Gastrocnemius medialis (tissue), 4 donors: ENCODE measurements at regions of chr12 and their contacts with region 1.

Region 1: DNA sequence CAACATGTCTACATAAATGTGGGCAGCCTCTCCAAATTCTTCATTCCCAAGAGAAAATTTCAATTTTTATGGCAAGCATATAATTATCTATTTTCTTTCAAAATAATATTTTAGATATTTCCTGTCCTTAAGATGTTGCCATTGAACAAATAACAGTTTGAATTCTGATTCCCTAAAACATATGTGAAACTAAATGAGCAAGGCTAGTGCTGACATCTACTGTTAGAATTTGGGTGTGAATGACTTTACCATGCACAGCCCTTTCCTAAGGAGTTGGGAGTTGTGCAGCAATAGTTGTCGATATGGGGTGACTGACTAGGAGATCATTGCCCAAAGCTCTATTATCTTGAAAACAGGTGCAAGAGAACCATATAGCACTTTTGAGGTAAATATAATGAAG is 108.2 kb upstream of the SLC38A4 start:
- DNase-seq: no peak
- ATAC-seq: peak; percentile 91 to 92
- H3K4me3 ChIP-seq: no peak overlapping the region
- H3K27ac ChIP-seq: no peak overlapping the region
- H3K4me1 ChIP-seq: peaks cover 4 to 5% of the 10 kb centered on the region in 2 donors
- H3K27me3 ChIP-seq: no peaks in the 10 kb centered on the region
- CTCF ChIP-seq: peak; percentile 41 to 63 (median 55)
- POLR2A ChIP-seq: no peak

Region 2: GRCh38 chr12:46124848-46125619 is 808.9 kb before region 1 on chr12:
- in situ Hi-C with region 1: no loop called
- intact Hi-C with region 1: loop called (anchors 2 kb)
- DNase-seq: peak in 1 of 2 donors; percentile 41
- ATAC-seq: peak; percentile 88 to 94
- H3K4me3 ChIP-seq: peak overlapping the region in 1 of 4 donors; percentile 18
- H3K27ac ChIP-seq: no peak overlapping the region
- H3K4me1 ChIP-seq: no peaks in the 10 kb centered on the region
- H3K27me3 ChIP-seq: no peaks in the 10 kb centered on the region
- CTCF ChIP-seq: peak; percentile 59 to 85 (median 65)
- POLR2A ChIP-seq: no peak

Region 3: GRCh38 chr12:46332260-46332659 is 601.7 kb before region 1 on chr12:
- in situ Hi-C with region 1: loop called in 2 of 4 experiments (anchors 10 to 25 kb)
- intact Hi-C with region 1: no loop called
- DNase-seq: no peak
- ATAC-seq: no peak
- H3K4me3 ChIP-seq: no peak overlapping the region
- H3K27ac ChIP-seq: no peak overlapping the region
- H3K4me1 ChIP-seq: no peaks in the 10 kb centered on the region
- H3K27me3 ChIP-seq: no peaks in the 10 kb centered on the region
- CTCF ChIP-seq: no peak
- POLR2A ChIP-seq: no peak

Region 4: GRCh38 chr12:46342562-46343033 is 591.3 kb before region 1 on chr12:
- in situ Hi-C with region 1: loop called in 3 of 4 experiments (anchors 10 to 25 kb)
- intact Hi-C with region 1: loop called (anchors 1 kb)
- DNase-seq: no peak
- ATAC-seq: peak; percentile 80 to 87
- H3K4me3 ChIP-seq: no peak overlapping the region
- H3K27ac ChIP-seq: no peak overlapping the region
- H3K4me1 ChIP-seq: peaks cover 4 to 5% of the 10 kb centered on the region in 2 donors
- H3K27me3 ChIP-seq: no peaks in the 10 kb centered on the region
- CTCF ChIP-seq: peak; percentile 56 to 79 (median 66)
- POLR2A ChIP-seq: no peak

Region 5: DNA sequence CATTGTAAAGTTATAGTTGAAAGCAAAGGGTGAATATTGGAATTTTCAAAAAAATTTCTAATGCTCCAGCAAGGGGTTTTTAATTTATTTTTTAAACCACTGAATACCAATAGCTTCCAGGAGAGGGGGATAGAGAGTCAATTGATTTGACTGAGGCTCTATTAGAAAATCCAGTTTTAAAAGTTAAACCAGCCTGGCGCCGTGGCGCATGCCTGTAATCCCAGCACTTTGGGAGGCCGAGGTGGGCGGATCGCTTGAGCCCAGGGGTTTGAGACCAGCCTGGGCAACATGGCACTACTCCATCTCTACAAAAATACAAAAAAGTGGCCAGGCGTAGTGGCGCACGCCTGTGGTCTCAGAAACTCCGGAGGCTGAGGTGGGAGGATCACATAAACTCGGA is 258.2 kb before region 1 on chr12:
- in situ Hi-C with region 1: loop called in 3 of 4 experiments (anchors 5 to 10 kb)
- intact Hi-C with region 1: loop called (anchors 1 kb)
- DNase-seq: no peak
- ATAC-seq: no peak
- H3K4me3 ChIP-seq: no peak overlapping the region
- H3K27ac ChIP-seq: no peak overlapping the region
- H3K4me1 ChIP-seq: peaks cover 27 to 38% of the 10 kb centered on the region in 2 donors
- H3K27me3 ChIP-seq: no peaks in the 10 kb centered on the region
- CTCF ChIP-seq: peak; percentile 60 to 77 (median 72)
- POLR2A ChIP-seq: no peak

Region 6: DNA sequence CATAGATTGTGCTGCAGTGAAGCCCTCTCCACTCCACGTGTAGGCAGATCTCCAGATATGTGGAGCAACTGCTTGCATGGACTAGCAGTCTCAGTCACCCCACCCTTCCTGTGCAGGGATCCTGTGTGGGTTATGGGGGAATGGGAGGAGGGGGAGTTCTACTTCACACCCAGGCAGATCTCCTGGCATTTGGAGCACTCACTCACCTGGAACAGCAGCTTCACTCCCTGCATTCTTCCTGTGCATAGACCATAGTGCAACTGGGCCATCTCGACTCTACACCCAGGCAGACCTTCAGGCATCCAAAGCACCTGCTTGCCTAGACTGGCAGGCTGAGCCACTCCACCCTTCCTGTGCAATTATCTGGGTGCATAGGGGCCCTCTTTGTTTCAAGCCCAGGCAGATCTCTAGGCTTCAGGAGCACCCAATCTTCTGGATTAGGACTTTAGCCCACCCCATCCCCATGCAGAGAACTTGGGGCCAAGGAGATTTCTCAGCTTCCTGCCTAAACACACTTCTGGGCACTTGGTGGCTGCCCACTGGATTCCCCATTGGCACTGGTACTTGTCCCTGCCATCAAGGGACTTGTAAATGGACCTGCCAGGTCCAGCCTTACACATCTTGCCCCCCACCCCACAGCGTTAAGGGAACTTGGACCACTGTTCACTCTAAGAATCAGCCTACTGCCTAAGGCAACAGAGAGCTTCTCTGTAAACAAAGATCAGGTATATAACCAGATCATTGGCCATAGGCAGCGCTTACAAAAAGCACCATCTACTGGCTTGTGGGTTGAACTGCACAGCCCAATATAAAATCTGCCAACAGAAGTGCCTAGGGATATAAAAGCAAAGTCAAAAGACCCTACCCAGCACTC is 49.7 kb after region 1 on chr12:
- in situ Hi-C with region 1: no loop called
- intact Hi-C with region 1: loop called (anchors 1 kb)
- DNase-seq: peak in 1 of 2 donors; percentile 36
- ATAC-seq: peak; percentile 98 to 99
- H3K4me3 ChIP-seq: no peak overlapping the region
- H3K27ac ChIP-seq: peak overlapping the region in 1 of 4 donors; percentile 17
- H3K4me1 ChIP-seq: peaks cover 3 to 10% of the 10 kb centered on the region in 2 donors
- H3K27me3 ChIP-seq: no peaks in the 10 kb centered on the region
- CTCF ChIP-seq: peak; percentile 73 to 85 (median 78)
- POLR2A ChIP-seq: no peak